ENCODE measurements at regions of chr17 and their contacts with region 1.

Region 1: DNA sequence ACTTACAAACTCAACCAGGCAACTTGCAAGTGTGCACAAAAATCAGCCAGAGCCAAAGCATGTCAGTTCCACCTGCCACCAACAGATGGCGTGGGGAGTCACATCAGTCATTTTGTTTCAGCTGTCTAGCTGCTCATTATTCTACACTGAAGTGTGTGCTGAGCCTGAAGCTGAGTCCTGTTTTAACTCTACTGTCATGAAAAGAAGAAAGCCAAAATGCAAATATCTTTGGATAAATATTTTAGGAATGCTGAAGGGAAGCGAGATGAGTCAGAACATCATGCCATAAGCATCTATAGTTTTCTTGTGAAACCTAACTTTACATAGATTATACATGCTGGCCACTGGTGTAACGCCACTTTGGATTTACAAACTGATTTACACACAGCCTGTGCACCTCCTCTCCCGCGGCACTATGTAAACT is 172.6 kb downstream of the CDK5R1 start:
- DNase-seq: peak; percentile 70 to 97 (median 85)

Region 2: GRCh38 chr17:32627239-32627996 is 32.0 kb before region 1 on chr17:
- intact Hi-C with region 1: no loop called
- DNase-seq: peak; percentile 46 to 92 (median 69)

Region 3: GRCh38 chr17:32755045-32755805 is 95.8 kb after region 1 on chr17:
- intact Hi-C with region 1: loop called (anchors 1 kb)
- DNase-seq: no peak

Measured in posterior cingulate gyrus (tissue), 11 donors.